WTC11 (cell line): ENCODE measurements at regions of chr4 and their contacts with region 1.

Region 1: GRCh38 chr4:98467627-98468072 is 190.8 kb downstream of the TSPAN5 start:
- DNase-seq: peak; percentile 73
- ATAC-seq: peak; percentile 96
- H3K4me3 Mint-ChIP-seq: peak overlapping the region; percentile 67
- H3K27ac Mint-ChIP-seq: peak overlapping the region; percentile 32; the same call in 1 of the 2 replicates
- H3K4me1 Mint-ChIP-seq: peaks cover 10% of the 10 kb centered on the region
- H3K27me3 Mint-ChIP-seq: no peaks in the 10 kb centered on the region
- CTCF ChIP-seq: peak; percentile 57; the same call in 1 of the 2 replicates

Region 2: GRCh38 chr4:98113012-98113411 is 354.6 kb before region 1 on chr4:
- CTCF ChIA-PET with region 1: interaction called, 14 read pairs
- POLR2A ChIA-PET with region 1: no interaction called
- DNase-seq: no peak
- ATAC-seq: peak; percentile 79
- H3K4me3 Mint-ChIP-seq: no peak overlapping the region
- H3K27ac Mint-ChIP-seq: peak overlapping the region; percentile 52; the same call in 1 of the 2 replicates
- H3K4me1 Mint-ChIP-seq: peaks cover 51% of the 10 kb centered on the region
- H3K27me3 Mint-ChIP-seq: no peaks in the 10 kb centered on the region
- CTCF ChIP-seq: no peak

Region 3: GRCh38 chr4:98332017-98332416 is 135.6 kb before region 1 on chr4:
- CTCF ChIA-PET with region 1: no interaction called
- POLR2A ChIA-PET with region 1: no interaction called
- DNase-seq: no peak
- ATAC-seq: no peak
- H3K4me3 Mint-ChIP-seq: no peak overlapping the region
- H3K27ac Mint-ChIP-seq: no peak overlapping the region
- H3K4me1 Mint-ChIP-seq: peaks cover 14% of the 10 kb centered on the region
- H3K27me3 Mint-ChIP-seq: peaks cover 14% of the 10 kb centered on the region
- CTCF ChIP-seq: no peak

Region 4: DNA sequence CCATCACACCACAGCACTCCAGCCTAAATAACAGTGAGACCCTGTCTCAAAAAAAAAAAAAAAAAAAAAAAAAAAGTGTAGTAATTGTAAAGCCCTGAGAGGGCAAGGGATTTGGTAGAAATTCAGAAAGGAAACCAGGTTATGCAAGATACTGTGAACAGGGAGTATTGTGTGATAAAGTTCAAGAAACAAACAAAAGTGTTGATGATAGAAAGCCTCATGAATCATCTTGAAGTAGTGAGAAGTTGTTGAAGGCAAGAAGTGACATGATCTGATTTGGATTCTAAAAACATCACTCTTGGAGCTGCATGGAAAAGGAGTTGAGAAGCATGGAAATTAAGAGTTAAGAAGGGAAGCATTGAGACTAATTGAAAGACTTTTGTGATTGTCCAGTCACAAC is 104.2 kb before region 1 on chr4:
- CTCF ChIA-PET with region 1: no interaction called
- POLR2A ChIA-PET with region 1: no interaction called
- DNase-seq: no peak
- ATAC-seq: no peak
- H3K4me3 Mint-ChIP-seq: no peak overlapping the region
- H3K27ac Mint-ChIP-seq: no peak overlapping the region; the same call in 1 of the 2 replicates
- H3K4me1 Mint-ChIP-seq: no peaks in the 10 kb centered on the region
- H3K27me3 Mint-ChIP-seq: no peaks in the 10 kb centered on the region
- CTCF ChIP-seq: no peak

Region 5: GRCh38 chr4:98485816-98486345 is 18.2 kb after region 1 on chr4:
- CTCF ChIA-PET with region 1: interaction called, 14 read pairs
- POLR2A ChIA-PET with region 1: no interaction called
- DNase-seq: no peak
- ATAC-seq: no peak
- H3K4me3 Mint-ChIP-seq: no peak overlapping the region
- H3K27ac Mint-ChIP-seq: no peak overlapping the region
- H3K4me1 Mint-ChIP-seq: peaks cover 69% of the 10 kb centered on the region
- H3K27me3 Mint-ChIP-seq: no peaks in the 10 kb centered on the region; the same call in 1 of the 2 replicates
- CTCF ChIP-seq: no peak

Region 6: DNA sequence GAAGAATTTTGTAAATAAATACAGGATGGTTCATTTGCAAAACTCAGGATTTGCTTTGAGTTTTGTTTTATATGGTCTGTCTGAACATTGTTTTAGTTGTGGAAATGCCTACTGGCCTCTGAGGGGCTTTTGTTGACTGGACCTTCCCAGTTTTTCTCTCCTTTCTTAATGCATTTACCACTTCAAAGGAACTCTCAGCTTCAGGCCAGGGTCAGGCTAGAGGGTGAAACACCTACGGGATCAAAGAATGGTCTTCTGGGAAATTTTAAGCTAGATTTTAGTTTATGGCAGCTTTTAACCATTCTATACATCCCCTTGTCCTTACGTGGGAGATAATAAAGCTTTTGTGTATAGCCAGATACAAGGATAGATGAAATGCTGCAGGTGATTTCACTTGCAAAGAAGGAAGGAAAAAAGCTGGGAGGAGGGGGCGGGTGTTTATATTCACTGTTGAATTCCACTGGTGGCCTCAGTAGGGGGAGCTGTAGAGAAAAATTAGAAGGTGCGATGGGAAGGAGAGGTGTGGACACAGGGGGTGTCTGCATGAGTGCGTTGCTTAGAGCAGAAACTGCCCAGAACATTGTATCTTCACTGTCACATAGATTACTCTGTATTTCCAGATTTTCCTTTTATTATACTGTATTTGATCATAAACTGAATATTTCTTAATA is 38.9 kb after region 1 on chr4:
- CTCF ChIA-PET with region 1: interaction called, 18 read pairs
- POLR2A ChIA-PET with region 1: no interaction called
- DNase-seq: peak; percentile 30
- ATAC-seq: peak; percentile 96
- H3K4me3 Mint-ChIP-seq: no peak overlapping the region; the same call in 1 of the 2 replicates
- H3K27ac Mint-ChIP-seq: peak overlapping the region; percentile 50; the same call in 1 of the 2 replicates
- H3K4me1 Mint-ChIP-seq: peaks cover 38% of the 10 kb centered on the region
- H3K27me3 Mint-ChIP-seq: no peaks in the 10 kb centered on the region
- CTCF ChIP-seq: peak; percentile 42; the same call in 1 of the 2 replicates

Region 7: DNA sequence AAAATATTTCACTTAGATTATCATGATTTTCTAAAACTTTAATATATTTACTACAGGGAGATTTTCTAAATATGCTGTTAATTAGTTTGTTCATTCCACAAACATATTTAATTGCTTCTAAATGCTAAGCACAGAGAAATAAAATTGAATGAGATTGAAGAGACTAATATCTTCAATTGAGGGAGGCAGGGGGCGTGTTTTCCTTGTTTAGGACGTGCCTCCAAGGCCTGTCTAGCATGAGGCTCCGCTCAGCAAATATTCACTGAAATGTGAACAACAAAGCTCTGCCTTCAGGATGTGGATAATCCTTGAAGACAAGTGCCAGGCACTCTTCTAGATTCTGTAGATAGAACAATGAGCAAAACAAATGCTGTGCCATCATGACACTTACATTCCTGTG is 92.7 kb after region 1 on chr4:
- CTCF ChIA-PET with region 1: interaction called, 11 read pairs
- POLR2A ChIA-PET with region 1: no interaction called
- DNase-seq: no peak
- ATAC-seq: 0 out of 2 replicates have a peak, but pooled peaks have one; percentile 8
- H3K4me3 Mint-ChIP-seq: no peak overlapping the region
- H3K27ac Mint-ChIP-seq: no peak overlapping the region; the same call in 1 of the 2 replicates
- H3K4me1 Mint-ChIP-seq: peaks cover 89% of the 10 kb centered on the region
- H3K27me3 Mint-ChIP-seq: no peaks in the 10 kb centered on the region
- CTCF ChIP-seq: no peak

Region 8: GRCh38 chr4:98599617-98600205 is 132.1 kb after region 1 on chr4:
- CTCF ChIA-PET with region 1: no interaction called
- POLR2A ChIA-PET with region 1: no interaction called
- DNase-seq: no peak
- ATAC-seq: no peak
- H3K4me3 Mint-ChIP-seq: no peak overlapping the region
- H3K27ac Mint-ChIP-seq: no peak overlapping the region
- H3K4me1 Mint-ChIP-seq: peaks cover 35% of the 10 kb centered on the region
- H3K27me3 Mint-ChIP-seq: peaks cover 5% of the 10 kb centered on the region
- CTCF ChIP-seq: no peak

Region 9: DNA sequence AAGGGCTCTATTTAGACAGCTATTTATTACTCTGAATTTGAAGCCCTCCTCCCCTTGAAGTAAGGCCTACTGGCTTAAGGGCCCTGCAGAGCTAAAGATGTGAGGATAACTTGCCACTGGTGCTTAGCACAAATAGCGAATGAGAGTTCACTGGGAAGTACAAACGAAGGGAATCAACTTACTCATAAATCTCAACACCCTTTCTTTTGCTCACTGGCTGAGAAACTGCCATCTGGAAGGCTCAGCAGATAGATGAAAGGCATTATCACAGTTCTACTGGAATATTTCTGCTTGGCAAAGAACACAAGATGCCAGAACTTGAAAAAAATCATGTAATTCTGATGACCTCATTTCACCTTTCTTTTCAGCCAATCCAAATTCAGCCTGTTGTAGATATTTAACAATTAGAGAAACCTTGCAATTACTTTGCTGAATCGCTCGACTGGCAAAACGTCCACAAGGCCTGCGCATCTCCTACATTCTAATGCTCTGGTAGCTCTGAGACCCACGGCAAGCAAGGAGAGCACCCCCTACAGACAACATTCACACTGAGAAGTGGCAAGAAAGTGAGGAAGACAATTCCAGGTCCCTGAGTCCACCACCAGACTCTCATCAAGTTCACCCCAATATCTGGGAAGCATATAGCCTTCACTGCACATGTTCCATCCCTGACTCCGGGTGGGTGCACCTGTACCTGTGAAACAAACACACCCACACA is 163.2 kb after region 1 on chr4:
- CTCF ChIA-PET with region 1: interaction called, 14 read pairs
- POLR2A ChIA-PET with region 1: no interaction called
- DNase-seq: no peak
- ATAC-seq: peak; percentile 60
- H3K4me3 Mint-ChIP-seq: no peak overlapping the region
- H3K27ac Mint-ChIP-seq: no peak overlapping the region
- H3K4me1 Mint-ChIP-seq: peaks cover 44% of the 10 kb centered on the region
- H3K27me3 Mint-ChIP-seq: no peaks in the 10 kb centered on the region
- CTCF ChIP-seq: no peak

Region 10: DNA sequence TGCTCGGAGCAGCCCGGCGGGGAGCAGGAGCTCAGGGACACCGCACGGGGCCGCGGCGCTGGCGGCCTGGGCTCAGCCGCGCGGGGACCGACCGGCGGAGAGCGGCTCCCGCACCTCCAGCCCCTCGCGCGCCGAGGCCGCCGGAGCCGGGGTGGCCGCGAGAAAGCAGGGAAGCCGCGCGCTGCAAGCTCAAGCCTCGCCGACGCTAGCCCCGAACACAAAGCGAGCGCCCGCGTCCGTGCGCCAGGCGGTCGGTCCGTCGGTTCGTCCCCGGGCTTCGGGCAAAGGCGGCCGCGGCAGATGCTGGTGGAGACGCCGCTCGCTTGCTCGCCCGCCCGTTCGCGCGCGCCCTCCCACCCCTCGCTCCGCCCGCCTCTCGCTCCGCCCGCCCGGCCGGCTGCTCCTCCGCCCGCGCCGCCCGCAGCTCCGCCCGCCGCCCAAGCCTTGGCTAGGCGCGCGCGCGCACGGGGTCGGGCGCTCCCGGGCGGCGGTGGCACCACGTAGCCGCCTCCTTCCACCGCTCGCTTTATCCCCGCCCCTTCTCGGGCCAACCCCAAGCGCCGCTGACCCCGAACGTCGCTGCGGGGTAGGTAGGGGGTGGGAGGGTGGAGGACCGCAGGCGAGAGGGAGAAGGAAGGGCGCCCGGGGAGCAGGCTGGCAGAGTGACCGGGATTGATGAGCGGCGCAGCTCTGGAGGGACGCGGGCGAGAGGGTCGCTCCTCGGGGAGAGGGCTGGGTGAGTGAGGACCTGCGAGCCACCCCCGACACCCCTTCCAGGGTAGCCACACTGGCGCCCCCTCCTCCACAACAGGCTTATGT is 190.8 kb after region 1 on chr4 and contains the start of gene TSPAN5:
- CTCF ChIA-PET with region 1: interaction called, 18 read pairs
- POLR2A ChIA-PET with region 1: interaction called, 6 read pairs
- DNase-seq: peak; percentile 84
- ATAC-seq: peak; percentile 80
- H3K4me3 Mint-ChIP-seq: peak within 1 kb of the TSS; percentile 96
- H3K27ac Mint-ChIP-seq: peak within 1 kb of the TSS; percentile 93
- H3K4me1 Mint-ChIP-seq: peaks cover 71% of the 10 kb centered on the region
- H3K27me3 Mint-ChIP-seq: peaks cover 32% of the 10 kb centered on the region
- CTCF ChIP-seq: no peak
- total RNA-seq, gene TSPAN5: 19.1 to 22.7 TPM (median 20.8 TPM) in 3 replicates

Region 11: DNA sequence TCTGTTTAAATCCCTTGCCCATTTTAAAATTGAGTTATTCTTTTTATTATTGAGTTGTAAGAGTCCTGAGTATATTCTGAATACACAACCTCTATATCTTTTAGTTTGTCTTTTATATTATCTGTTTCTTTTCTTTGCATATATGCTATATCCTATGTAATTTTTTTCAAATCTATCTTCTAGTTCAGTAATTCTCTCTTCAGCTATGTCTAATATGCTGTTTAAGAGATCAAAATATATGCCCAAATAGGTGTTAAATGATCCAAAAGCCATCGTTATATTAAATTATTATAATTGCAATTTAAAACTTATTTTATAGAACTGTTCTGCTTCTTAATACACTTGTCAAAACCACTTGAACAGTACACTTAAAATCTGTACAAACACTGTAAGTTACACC is 298.1 kb after region 1 on chr4:
- CTCF ChIA-PET with region 1: no interaction called
- POLR2A ChIA-PET with region 1: no interaction called
- DNase-seq: no peak
- ATAC-seq: no peak
- H3K4me3 Mint-ChIP-seq: no peak overlapping the region
- H3K27ac Mint-ChIP-seq: no peak overlapping the region
- H3K4me1 Mint-ChIP-seq: peaks cover 6% of the 10 kb centered on the region
- H3K27me3 Mint-ChIP-seq: no peaks in the 10 kb centered on the region; the same call in 1 of the 2 replicates
- CTCF ChIP-seq: no peak